ENCODE measurements at regions of chr15 and their contacts with region 1.

Region 1: DNA sequence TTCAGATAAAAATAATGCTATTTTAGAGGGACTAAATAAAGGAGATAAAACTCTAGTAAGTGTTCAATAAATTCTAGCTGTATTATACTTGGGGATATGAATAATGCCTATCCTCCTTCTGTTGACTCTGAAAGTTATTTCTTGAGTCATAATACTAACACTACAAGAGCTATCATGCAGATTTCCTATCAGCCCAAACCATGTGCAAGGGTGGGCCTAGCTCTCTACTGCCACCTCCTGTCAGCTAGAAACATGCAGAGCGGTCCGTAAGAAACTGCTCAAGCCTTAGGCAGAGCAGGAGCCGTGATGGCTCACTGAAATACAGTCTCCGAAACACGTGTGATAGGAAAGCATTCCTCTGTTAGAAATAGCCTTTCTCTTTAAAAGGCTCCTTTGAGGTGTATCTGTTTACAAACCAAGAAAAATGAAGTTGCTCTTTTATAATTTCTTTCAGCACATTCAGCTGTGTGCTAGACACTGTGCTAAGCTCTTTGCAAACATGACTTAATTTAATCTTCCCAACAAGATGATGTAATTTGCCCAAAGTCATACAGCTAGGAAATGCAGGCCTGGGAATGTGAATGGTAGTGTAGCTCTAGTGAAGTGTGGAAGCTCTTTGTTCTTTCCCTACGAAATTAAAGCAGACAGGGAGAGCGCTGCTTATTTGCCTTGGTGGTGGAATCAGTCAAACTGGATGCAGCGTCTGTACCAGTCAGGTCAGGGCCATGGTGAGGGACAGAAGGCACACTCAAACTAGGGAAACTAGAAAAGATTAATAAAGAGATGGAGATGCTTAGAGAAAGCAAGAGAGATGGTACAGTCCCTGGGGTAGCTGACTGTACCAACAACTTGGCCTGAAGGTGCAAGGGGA is 43.1 kb downstream of the MTHFS start:
- DNase-seq: peak; percentile 44
- H3K4me3 ChIP-seq: no peak overlapping the region
- H3K27me3 ChIP-seq: no peaks in the 10 kb centered on the region
- CTCF ChIP-seq: peak; percentile 97

Region 2: GRCh38 chr15:79364571-79365240 is 489.0 kb before region 1 on chr15:
- CTCF ChIA-PET with region 1: interaction called, 20 read pairs
- POLR2A ChIA-PET with region 1: no interaction called
- DNase-seq: no peak
- H3K4me3 ChIP-seq: no peak overlapping the region
- H3K27me3 ChIP-seq: no peaks in the 10 kb centered on the region
- CTCF ChIP-seq: peak; percentile 52

Region 3: GRCh38 chr15:79450648-79451047 is 403.0 kb before region 1 on chr15:
- CTCF ChIA-PET with region 1: interaction called, 10 read pairs
- POLR2A ChIA-PET with region 1: no interaction called
- DNase-seq: no peak
- H3K4me3 ChIP-seq: no peak overlapping the region
- H3K27me3 ChIP-seq: no peaks in the 10 kb centered on the region; the same call in 1 of the 2 replicates
- CTCF ChIP-seq: peak; percentile 24; the same call in 1 of the 2 replicates

Region 4: GRCh38 chr15:79743031-79743430 is 110.7 kb before region 1 on chr15:
- CTCF ChIA-PET with region 1: no interaction called
- POLR2A ChIA-PET with region 1: no interaction called
- DNase-seq: no peak
- H3K4me3 ChIP-seq: no peak overlapping the region
- H3K27me3 ChIP-seq: no peaks in the 10 kb centered on the region
- CTCF ChIP-seq: no peak

Region 5: DNA sequence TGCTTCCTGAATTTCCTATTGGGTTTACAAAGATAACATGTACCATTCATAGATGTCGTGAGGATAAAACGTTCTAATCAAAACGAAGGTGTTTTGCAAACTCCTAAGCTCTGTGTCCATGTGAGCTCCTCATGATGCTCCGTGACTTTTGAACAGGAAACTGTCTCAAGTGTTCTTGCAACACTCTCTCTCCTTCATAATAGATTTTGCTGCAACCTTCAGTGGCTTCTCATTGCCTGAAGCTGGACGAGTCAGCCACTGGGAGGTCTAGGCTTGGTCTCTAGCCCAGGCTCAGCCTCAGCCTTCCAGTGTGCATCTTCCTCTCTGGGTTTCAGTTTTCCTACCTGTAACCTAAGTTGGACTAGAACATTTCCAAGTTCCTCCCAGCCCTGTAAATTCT is 136.0 kb after region 1 on chr15:
- CTCF ChIA-PET with region 1: interaction called, 47 read pairs
- POLR2A ChIA-PET with region 1: no interaction called
- DNase-seq: no peak
- H3K4me3 ChIP-seq: no peak overlapping the region
- H3K27me3 ChIP-seq: peaks cover 1% of the 10 kb centered on the region; the same call in 1 of the 2 replicates
- CTCF ChIP-seq: no peak